WTC11 (cell line): ENCODE measurements at regions of chr17 and their contacts with region 1.

Region 1: GRCh38 chr17:42183741-42184711 is 1.2 kb downstream of the HCRT start:
- DNase-seq: peak; percentile 88
- ATAC-seq: peak; percentile 60
- H3K4me3 Mint-ChIP-seq: peak overlapping the region; percentile 80
- H3K27ac Mint-ChIP-seq: no peak overlapping the region
- H3K4me1 Mint-ChIP-seq: peaks cover 28% of the 10 kb centered on the region
- H3K27me3 Mint-ChIP-seq: peaks cover 70% of the 10 kb centered on the region
- CTCF ChIP-seq: peak; percentile 81

Region 2: GRCh38 chr17:42120770-42121769 is 63.0 kb before region 1 on chr17 and contains the start of gene KAT2A:
- CTCF ChIA-PET with region 1: interaction called, 22 read pairs
- POLR2A ChIA-PET with region 1: interaction called, 3 read pairs
- DNase-seq: peak; percentile 85
- ATAC-seq: peak; percentile 73
- H3K4me3 Mint-ChIP-seq: peak within 1 kb of the TSS; percentile 69
- H3K27ac Mint-ChIP-seq: 0 out of 2 replicates have a peak within 1 kb of the TSS, but pooled peaks have one; percentile 19
- H3K4me1 Mint-ChIP-seq: peaks cover 31% of the 10 kb centered on the region
- H3K27me3 Mint-ChIP-seq: no peaks in the 10 kb centered on the region
- CTCF ChIP-seq: no peak
- total RNA-seq, gene KAT2A: 44.8 to 54.0 TPM (median 52.7 TPM) in 3 replicates

Region 3: DNA sequence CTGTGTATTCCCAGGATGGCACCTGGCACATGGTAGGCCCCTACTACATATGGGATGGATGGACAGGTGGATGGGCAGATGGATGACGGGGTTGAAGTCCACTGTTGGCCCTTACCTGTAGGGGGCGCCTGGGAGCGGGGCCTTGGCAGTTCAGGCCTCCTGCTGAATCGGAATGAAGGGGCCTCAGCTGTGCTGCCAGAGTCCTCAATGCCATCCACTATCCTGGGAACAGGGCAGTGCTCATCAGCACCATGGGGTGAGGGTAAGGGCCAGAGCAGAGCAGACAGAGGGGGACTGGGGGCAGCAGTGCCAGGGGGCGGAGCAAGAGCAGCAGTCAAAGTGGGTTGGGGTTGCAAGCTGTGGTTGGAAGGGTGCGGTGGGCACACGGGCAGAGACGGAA is 20.9 kb before region 1 on chr17:
- CTCF ChIA-PET with region 1: interaction called, 33 read pairs
- POLR2A ChIA-PET with region 1: no interaction called
- DNase-seq: peak; percentile 87
- ATAC-seq: peak; percentile 86
- H3K4me3 Mint-ChIP-seq: no peak overlapping the region
- H3K27ac Mint-ChIP-seq: 0 out of 2 replicates have a peak overlapping the region, but pooled peaks have one; percentile 54
- H3K4me1 Mint-ChIP-seq: 0 out of 2 replicates have a peak, but pooled peaks cover 3% of the 10 kb centered on the region
- H3K27me3 Mint-ChIP-seq: no peaks in the 10 kb centered on the region; the same call in 1 of the 2 replicates
- CTCF ChIP-seq: peak; percentile 81

Region 4: GRCh38 chr17:42171831-42172230 is 12.2 kb before region 1 on chr17:
- CTCF ChIA-PET with region 1: interaction called, 13 read pairs
- POLR2A ChIA-PET with region 1: no interaction called
- DNase-seq: peak; percentile 44
- ATAC-seq: peak; percentile 82
- H3K4me3 Mint-ChIP-seq: no peak overlapping the region
- H3K27ac Mint-ChIP-seq: no peak overlapping the region
- H3K4me1 Mint-ChIP-seq: no peaks in the 10 kb centered on the region
- H3K27me3 Mint-ChIP-seq: no peaks in the 10 kb centered on the region; the same call in 1 of the 2 replicates
- CTCF ChIP-seq: no peak

Region 5: DNA sequence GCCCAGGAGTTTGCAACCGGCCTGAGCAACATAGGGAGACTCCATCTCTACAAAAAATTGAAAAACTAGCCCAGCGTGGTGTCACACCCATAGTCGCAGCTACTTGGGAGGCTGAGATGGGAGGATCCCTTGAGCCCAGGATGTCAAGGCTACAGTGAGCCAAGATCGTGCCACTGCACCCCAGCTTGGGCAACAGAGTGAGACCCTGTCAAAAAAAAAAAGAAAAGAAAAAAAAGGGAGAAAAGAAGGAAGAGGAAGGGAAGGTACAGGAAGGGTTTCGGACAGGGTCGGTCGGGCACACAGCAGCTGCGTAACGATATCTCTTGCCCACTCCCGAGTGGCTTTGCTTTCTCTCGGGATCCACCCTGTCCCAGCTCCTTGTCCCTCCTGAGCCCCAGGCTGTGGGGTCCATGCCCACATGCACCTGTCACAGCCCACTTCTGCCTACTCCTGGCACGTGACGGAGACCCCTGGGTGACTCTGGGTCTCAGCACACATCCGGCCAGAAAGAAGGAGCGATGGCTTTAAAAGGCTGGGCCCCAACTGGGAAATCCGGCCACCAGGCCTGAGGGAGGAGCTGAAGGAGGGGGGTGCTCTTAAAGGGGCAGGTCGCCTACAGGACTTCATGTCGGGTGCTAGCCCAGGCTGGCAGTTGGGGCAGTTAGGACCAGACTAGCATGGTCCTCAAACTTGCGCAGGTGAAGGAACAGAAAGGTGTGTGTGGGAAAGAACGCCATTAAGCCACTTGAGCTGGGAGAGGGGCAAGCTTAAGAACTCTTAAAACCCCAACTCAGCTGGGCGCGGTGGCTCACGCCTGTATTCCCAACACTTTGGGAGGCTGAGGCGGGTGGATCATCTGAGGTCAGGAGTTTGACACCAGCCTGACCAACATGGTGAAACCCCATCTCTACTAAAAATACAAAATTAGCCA is 10.2 kb after region 1 on chr17 and contains the start of gene GHDC:
- CTCF ChIA-PET with region 1: interaction called, 29 read pairs
- POLR2A ChIA-PET with region 1: interaction called, 3 read pairs
- DNase-seq: peak; percentile 71
- ATAC-seq: peak; percentile 92
- H3K4me3 Mint-ChIP-seq: peak within 1 kb of the TSS; percentile 63
- H3K27ac Mint-ChIP-seq: peak within 1 kb of the TSS; percentile 78; the same call in 1 of the 2 replicates
- H3K4me1 Mint-ChIP-seq: peaks cover 16% of the 10 kb centered on the region
- H3K27me3 Mint-ChIP-seq: no peaks in the 10 kb centered on the region
- CTCF ChIP-seq: no peak
- total RNA-seq, gene GHDC: 7.5 to 11.1 TPM (median 11.1 TPM) in 3 replicates